A549 (cell line): ENCODE measurements at regions of chr12 and their contacts with region 1.

Region 1: GRCh38 chr12:1634590-1635191 is 5.7 kb downstream of the WNT5B start:
- DNase-seq: peak; percentile 76 to 82
- ATAC-seq: peak; percentile 74 to 87
- H3K4me3 ChIP-seq: no peak overlapping the region
- H3K27ac ChIP-seq: no peak overlapping the region
- H3K4me1 ChIP-seq: peaks cover 3% of the 10 kb centered on the region; the same call in 1 of the 3 replicates
- CTCF ChIP-seq: peak; percentile 76
- EP300 ChIP-seq: no peak
- POLR2A ChIP-seq: no peak
- RAD21 ChIP-seq: peak; percentile 73 to 80

Region 2: GRCh38 chr12:1605129-1606020 is 29.3 kb before region 1 on chr12:
- CTCF ChIA-PET with region 1: interaction called, 13 read pairs
- POLR2A ChIA-PET with region 1: interaction called, 6 read pairs
- DNase-seq: peak; percentile 86 to 88
- ATAC-seq: peak; percentile 91 to 92
- H3K4me3 ChIP-seq: peak overlapping the region; percentile 48
- H3K27ac ChIP-seq: peak overlapping the region; percentile 63 to 83
- H3K4me1 ChIP-seq: peaks cover 24% of the 10 kb centered on the region
- CTCF ChIP-seq: peak; percentile 81
- EP300 ChIP-seq: no peak
- POLR2A ChIP-seq: no peak
- RAD21 ChIP-seq: peak; percentile 81 to 89

Region 3: DNA sequence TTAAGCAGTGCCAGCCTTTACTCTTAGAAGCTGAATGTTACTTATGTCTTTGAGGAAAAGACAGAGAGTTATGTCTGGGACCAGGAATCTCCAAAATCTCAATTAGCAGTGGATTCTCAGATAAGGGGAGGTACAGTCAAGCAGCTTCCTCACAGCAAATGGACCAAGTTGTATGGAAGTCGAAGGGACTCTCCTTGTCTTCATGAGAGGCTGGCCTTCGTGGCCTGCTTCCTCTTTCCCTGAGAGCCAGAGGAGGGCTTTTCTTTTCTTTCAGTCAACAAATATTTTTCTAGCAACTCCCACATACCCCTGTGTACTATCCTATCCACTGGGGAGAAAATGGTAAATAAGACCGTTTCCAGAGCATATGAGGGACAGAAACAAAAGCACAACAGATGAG is 12.3 kb before region 1 on chr12:
- CTCF ChIA-PET with region 1: interaction called, 24 read pairs
- POLR2A ChIA-PET with region 1: no interaction called
- DNase-seq: no peak
- ATAC-seq: no peak
- H3K4me3 ChIP-seq: no peak overlapping the region
- H3K27ac ChIP-seq: no peak overlapping the region
- H3K4me1 ChIP-seq: 0 out of 3 replicates have a peak, but pooled peaks cover 6% of the 10 kb centered on the region
- CTCF ChIP-seq: no peak
- EP300 ChIP-seq: no peak
- POLR2A ChIP-seq: no peak
- RAD21 ChIP-seq: no peak

Region 4: GRCh38 chr12:1644534-1645438 is 10.1 kb after region 1 on chr12:
- CTCF ChIA-PET with region 1: interaction called, 196 read pairs
- POLR2A ChIA-PET with region 1: no interaction called
- DNase-seq: no peak
- ATAC-seq: no peak
- H3K4me3 ChIP-seq: no peak overlapping the region
- H3K27ac ChIP-seq: no peak overlapping the region
- H3K4me1 ChIP-seq: no peaks in the 10 kb centered on the region
- CTCF ChIP-seq: no peak
- EP300 ChIP-seq: no peak
- POLR2A ChIP-seq: no peak
- RAD21 ChIP-seq: no peak

Region 5: GRCh38 chr12:1776170-1776948 is 141.7 kb after region 1 on chr12:
- CTCF ChIA-PET with region 1: interaction called, 18 read pairs
- POLR2A ChIA-PET with region 1: no interaction called
- DNase-seq: peak; percentile 48 to 65
- ATAC-seq: peak; percentile 87 to 93; a peak in 5 of 6 replicates
- H3K4me3 ChIP-seq: no peak overlapping the region
- H3K27ac ChIP-seq: peak overlapping the region; percentile 37 to 67; a peak in 5 of 6 replicates
- H3K4me1 ChIP-seq: peaks cover 32% of the 10 kb centered on the region
- CTCF ChIP-seq: no peak
- EP300 ChIP-seq: no peak
- POLR2A ChIP-seq: no peak
- RAD21 ChIP-seq: no peak

Region 6: GRCh38 chr12:1781772-1782171 is 147.1 kb after region 1 on chr12:
- CTCF ChIA-PET with region 1: interaction called, 210 read pairs
- POLR2A ChIA-PET with region 1: no interaction called
- DNase-seq: no peak
- ATAC-seq: no peak
- H3K4me3 ChIP-seq: no peak overlapping the region
- H3K27ac ChIP-seq: no peak overlapping the region
- H3K4me1 ChIP-seq: peaks cover 13% of the 10 kb centered on the region
- CTCF ChIP-seq: no peak
- EP300 ChIP-seq: no peak
- POLR2A ChIP-seq: no peak
- RAD21 ChIP-seq: no peak